CD8-positive, alpha-beta T cell (primary cell): ENCODE measurements at regions of chr1 and their contacts with region 1.

Region 1: DNA sequence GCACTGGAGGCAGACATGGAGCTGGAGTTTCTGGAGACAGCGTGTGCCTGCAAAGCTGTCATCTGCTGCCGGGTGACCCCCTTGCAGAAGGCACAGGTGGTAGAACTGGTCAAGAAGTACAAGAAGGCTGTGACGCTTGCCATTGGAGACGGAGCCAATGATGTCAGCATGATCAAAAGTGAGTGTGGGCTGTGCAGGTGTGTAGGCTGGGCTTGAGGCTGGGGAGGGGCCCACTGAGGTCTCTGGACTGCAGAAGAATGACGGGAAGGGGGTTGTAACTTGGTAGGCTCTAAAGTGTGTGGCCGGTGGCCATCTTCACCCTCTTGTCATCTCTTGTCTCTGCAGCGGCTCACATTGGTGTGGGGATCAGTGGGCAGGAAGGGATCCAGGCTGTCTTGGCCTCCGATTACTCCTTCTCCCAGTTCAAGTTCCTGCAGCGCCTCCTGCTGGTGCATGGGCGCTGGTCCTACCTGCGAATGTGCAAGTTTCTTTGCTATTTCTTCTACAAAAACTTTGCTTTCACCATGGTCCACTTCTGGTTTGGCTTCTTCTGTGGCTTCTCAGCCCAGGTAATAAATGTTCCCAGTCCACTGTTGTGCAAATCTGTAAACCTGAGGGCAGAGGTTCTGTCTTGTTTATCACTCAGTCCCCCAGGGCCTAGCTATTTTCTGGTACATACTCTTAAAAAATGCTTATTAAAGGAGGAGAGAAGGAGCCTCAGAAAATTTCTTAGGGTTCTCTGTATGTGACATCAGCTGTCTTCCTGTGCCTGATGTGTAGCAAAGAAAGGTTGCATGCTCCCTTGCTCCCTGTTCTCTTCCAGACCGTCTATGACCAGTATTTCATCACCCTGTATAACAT is 19.9 kb downstream of the ATP8B2 start:
- DNase-seq: peak; percentile 59 to 88 (median 81)
- ATAC-seq: peak; percentile 48
- H3K4me3 ChIP-seq: peak overlapping the region; percentile 58 to 66
- H3K4me3 Mint-ChIP-seq: peak overlapping the region; percentile 87
- H3K27ac ChIP-seq: peak overlapping the region; percentile 8 to 77
- H3K27ac Mint-ChIP-seq: peak overlapping the region; percentile 81
- H3K4me1 ChIP-seq: peaks cover 70% of the 10 kb centered on the region
- H3K4me1 Mint-ChIP-seq: peaks cover 80% of the 10 kb centered on the region
- H3K27me3 ChIP-seq: no peaks in the 10 kb centered on the region
- H3K27me3 Mint-ChIP-seq: no peaks in the 10 kb centered on the region
- CTCF ChIP-seq: peak; percentile 66

Region 2: DNA sequence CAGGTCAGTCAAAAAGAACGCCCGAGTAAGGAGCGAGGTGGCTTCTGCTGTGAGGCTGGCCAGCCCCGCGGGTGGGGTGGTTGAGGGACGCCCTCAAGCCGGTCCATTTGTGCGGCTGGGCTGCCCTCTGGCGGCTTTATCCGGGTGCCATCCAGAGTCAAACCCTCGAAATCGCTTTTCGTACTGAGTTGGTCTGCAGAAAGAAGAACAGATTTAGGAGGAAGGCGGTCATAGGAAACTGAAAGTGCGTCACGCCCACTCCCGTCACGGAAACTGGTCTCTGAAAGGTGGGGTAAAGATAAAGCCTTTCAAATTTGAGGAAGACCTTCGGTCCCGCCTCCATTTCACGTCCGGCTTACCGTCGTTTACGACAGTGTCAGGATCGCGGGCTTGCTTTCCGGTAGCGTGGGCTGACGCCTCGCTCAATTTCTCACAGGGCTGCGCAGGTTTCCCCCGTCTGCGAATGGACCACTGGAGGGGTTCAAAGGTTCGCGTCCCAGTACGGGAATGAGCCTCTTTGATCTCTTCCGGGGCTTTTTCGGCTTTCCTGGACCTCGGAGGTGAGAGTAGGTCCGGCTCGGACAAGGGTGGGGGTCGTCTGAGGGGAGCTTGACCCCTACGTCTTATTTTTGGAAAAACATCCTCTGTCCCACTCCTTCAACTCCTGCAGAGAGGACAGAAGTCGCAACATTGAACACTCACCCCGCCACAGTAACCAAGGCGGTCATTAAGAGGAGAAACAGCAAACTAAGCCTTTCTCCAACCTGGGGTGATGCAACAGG is 72.8 kb before region 1 on chr1 and contains the start of gene HAX1:
- CTCF ChIA-PET with region 1: interaction called, 10 read pairs
- POLR2A ChIA-PET with region 1: interaction called, 4 read pairs
- intact Hi-C with region 1: loop called (anchors 2 kb)
- DNase-seq: peak; percentile 91 to 100 (median 94)
- ATAC-seq: peak; percentile 85
- H3K4me3 ChIP-seq: peak within 1 kb of the TSS; percentile 85 to 91
- H3K4me3 Mint-ChIP-seq: peak within 1 kb of the TSS; percentile 94
- H3K27ac ChIP-seq: peak within 1 kb of the TSS; percentile 88 to 92
- H3K27ac Mint-ChIP-seq: peak within 1 kb of the TSS; percentile 98
- H3K4me1 ChIP-seq: peaks cover 22% of the 10 kb centered on the region
- H3K4me1 Mint-ChIP-seq: peaks cover 38% of the 10 kb centered on the region
- H3K27me3 ChIP-seq: no peaks in the 10 kb centered on the region
- H3K27me3 Mint-ChIP-seq: no peaks in the 10 kb centered on the region
- CTCF ChIP-seq: peak; percentile 75
- total RNA-seq, gene HAX1: 56.8 to 58.4 TPM

Region 3: GRCh38 chr1:154361357-154361756 is 16.1 kb after region 1 on chr1:
- CTCF ChIA-PET with region 1: interaction called, 52 read pairs
- POLR2A ChIA-PET with region 1: no interaction called
- intact Hi-C with region 1: no loop called
- DNase-seq: no peak
- ATAC-seq: no peak
- H3K4me3 ChIP-seq: no peak overlapping the region
- H3K4me3 Mint-ChIP-seq: no peak overlapping the region
- H3K27ac ChIP-seq: no peak overlapping the region
- H3K27ac Mint-ChIP-seq: no peak overlapping the region
- H3K4me1 ChIP-seq: no peaks in the 10 kb centered on the region
- H3K4me1 Mint-ChIP-seq: no peaks in the 10 kb centered on the region
- H3K27me3 ChIP-seq: no peaks in the 10 kb centered on the region
- H3K27me3 Mint-ChIP-seq: no peaks in the 10 kb centered on the region
- CTCF ChIP-seq: no peak

Region 4: GRCh38 chr1:154442006-154442740 is 97.0 kb after region 1 on chr1:
- CTCF ChIA-PET with region 1: interaction called, 14 read pairs
- POLR2A ChIA-PET with region 1: interaction called, 3 read pairs
- intact Hi-C with region 1: no loop called
- DNase-seq: peak in 3 of 9 experiments; percentile 19 to 42 (median 30)
- ATAC-seq: no peak
- H3K4me3 ChIP-seq: no peak overlapping the region
- H3K4me3 Mint-ChIP-seq: peak overlapping the region; percentile 60
- H3K27ac ChIP-seq: peak overlapping the region in 1 of 2 experiments; percentile 22
- H3K27ac Mint-ChIP-seq: peak overlapping the region; percentile 89
- H3K4me1 ChIP-seq: peaks cover 58% of the 10 kb centered on the region
- H3K4me1 Mint-ChIP-seq: peaks cover 63% of the 10 kb centered on the region
- H3K27me3 ChIP-seq: no peaks in the 10 kb centered on the region
- H3K27me3 Mint-ChIP-seq: no peaks in the 10 kb centered on the region
- CTCF ChIP-seq: peak; percentile 24